CD8-positive, alpha-beta memory T cell (primary cell): ENCODE measurements at regions of chr5 and their contacts with region 1.

Region 1: GRCh38 chr5:142713121-142713706 is 27.3 kb upstream of the FGF1 start:
- DNase-seq: peak; percentile 74 to 89 (median 85)
- H3K4me3 ChIP-seq: peak overlapping the region; percentile 48
- H3K4me3 Mint-ChIP-seq: peak overlapping the region; percentile 40 to 83 (median 75)
- H3K27ac ChIP-seq: no peak overlapping the region
- H3K27ac Mint-ChIP-seq: peak overlapping the region in 5 of 8 donors; percentile 2 to 84 (median 26)
- H3K4me1 ChIP-seq: peaks cover 13% of the 10 kb centered on the region
- H3K4me1 Mint-ChIP-seq: peaks cover 20 to 22% (median 22%) of the 10 kb centered on the region in 3 donors
- H3K27me3 ChIP-seq: no peaks in the 10 kb centered on the region
- H3K27me3 Mint-ChIP-seq: peaks cover 0 to 5% of the 10 kb centered on the region in 2 donors

Region 2: DNA sequence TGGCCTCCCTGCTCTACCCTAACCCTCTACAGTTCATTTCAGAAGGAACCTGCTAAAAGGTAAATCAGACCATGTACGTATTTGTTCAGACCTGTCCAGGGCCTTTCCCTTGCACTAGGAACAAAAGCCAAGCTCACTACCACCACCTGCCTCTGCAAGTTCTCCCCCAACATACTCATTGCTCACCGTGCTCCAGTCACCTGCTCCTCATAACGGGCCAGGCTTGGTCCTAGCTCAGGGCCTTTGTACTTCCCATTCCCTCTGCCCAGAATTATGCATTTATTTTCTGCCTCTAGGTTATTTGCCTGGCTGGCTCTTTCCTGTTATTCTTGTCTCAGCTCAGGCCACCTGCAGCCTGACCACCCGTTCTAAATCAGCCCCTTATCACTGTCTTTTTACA is 22.5 kb before region 1 on chr5:
- CTCF ChIA-PET with region 1: interaction called, 10 read pairs
- POLR2A ChIA-PET with region 1: no interaction called
- DNase-seq: no peak
- H3K4me3 ChIP-seq: no peak overlapping the region
- H3K4me3 Mint-ChIP-seq: no peak overlapping the region
- H3K27ac ChIP-seq: no peak overlapping the region
- H3K27ac Mint-ChIP-seq: no peak overlapping the region
- H3K4me1 ChIP-seq: no peaks in the 10 kb centered on the region
- H3K4me1 Mint-ChIP-seq: no peaks in the 10 kb centered on the region
- H3K27me3 ChIP-seq: no peaks in the 10 kb centered on the region
- H3K27me3 Mint-ChIP-seq: peaks cover 16 to 18% of the 10 kb centered on the region in 2 donors

Region 3: GRCh38 chr5:142727735-142728047 is 14.5 kb after region 1 on chr5:
- CTCF ChIA-PET with region 1: interaction called, 38 read pairs
- POLR2A ChIA-PET with region 1: no interaction called
- DNase-seq: no peak
- H3K4me3 ChIP-seq: no peak overlapping the region
- H3K4me3 Mint-ChIP-seq: no peak overlapping the region
- H3K27ac ChIP-seq: no peak overlapping the region
- H3K27ac Mint-ChIP-seq: peak overlapping the region in 1 of 8 donors; percentile 71
- H3K4me1 ChIP-seq: no peaks in the 10 kb centered on the region
- H3K4me1 Mint-ChIP-seq: peaks cover 4 to 12% (median 9%) of the 10 kb centered on the region in 3 donors
- H3K27me3 ChIP-seq: no peaks in the 10 kb centered on the region
- H3K27me3 Mint-ChIP-seq: no peaks in the 10 kb centered on the region

Region 4: GRCh38 chr5:142748568-142749249 is 35.5 kb after region 1 on chr5:
- CTCF ChIA-PET with region 1: interaction called, 26 read pairs
- POLR2A ChIA-PET with region 1: no interaction called
- DNase-seq: peak; percentile 31 to 70 (median 39)
- H3K4me3 ChIP-seq: no peak overlapping the region
- H3K4me3 Mint-ChIP-seq: no peak overlapping the region
- H3K27ac ChIP-seq: no peak overlapping the region
- H3K27ac Mint-ChIP-seq: peak overlapping the region in 3 of 8 donors; percentile 10 to 51 (median 47)
- H3K4me1 ChIP-seq: no peaks in the 10 kb centered on the region
- H3K4me1 Mint-ChIP-seq: peaks cover 12 to 16% (median 13%) of the 10 kb centered on the region in 3 donors
- H3K27me3 ChIP-seq: no peaks in the 10 kb centered on the region
- H3K27me3 Mint-ChIP-seq: peaks cover 2 to 3% of the 10 kb centered on the region in 2 donors

Region 5: GRCh38 chr5:142783601-142784341 is 70.6 kb after region 1 on chr5:
- CTCF ChIA-PET with region 1: interaction called, 11 read pairs
- POLR2A ChIA-PET with region 1: no interaction called
- DNase-seq: peak in 4 of 5 donors; percentile 33 to 76 (median 49)
- H3K4me3 ChIP-seq: peak overlapping the region; percentile 42
- H3K4me3 Mint-ChIP-seq: peak overlapping the region; percentile 66 to 93 (median 87)
- H3K27ac ChIP-seq: peak overlapping the region; percentile 38
- H3K27ac Mint-ChIP-seq: peak overlapping the region; percentile 72 to 99 (median 93)
- H3K4me1 ChIP-seq: peaks cover 76% of the 10 kb centered on the region
- H3K4me1 Mint-ChIP-seq: peaks cover 89 to 93% (median 91%) of the 10 kb centered on the region in 3 donors
- H3K27me3 ChIP-seq: no peaks in the 10 kb centered on the region
- H3K27me3 Mint-ChIP-seq: no peaks in the 10 kb centered on the region

Region 6: DNA sequence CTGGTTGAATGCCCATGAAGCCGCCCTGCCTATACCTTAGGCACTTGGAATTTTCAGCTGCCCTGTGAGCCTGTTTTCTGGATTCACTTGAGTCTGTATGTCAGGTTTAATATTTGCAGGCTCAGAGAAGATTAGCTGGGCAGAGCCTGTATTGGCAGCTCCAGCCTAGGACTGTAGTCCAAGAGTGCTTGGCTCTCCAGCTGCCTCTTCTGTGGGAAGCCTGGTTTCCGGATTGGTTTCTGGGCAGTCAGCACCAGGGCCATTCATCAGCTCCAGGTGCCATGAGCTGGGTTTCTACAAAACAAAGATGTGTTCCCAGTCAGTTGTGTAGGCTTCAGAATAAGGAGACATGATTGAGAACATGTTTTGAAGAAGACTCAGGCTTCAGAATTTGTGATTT is 147.1 kb after region 1 on chr5:
- CTCF ChIA-PET with region 1: interaction called, 11 read pairs
- POLR2A ChIA-PET with region 1: no interaction called
- DNase-seq: no peak
- H3K4me3 ChIP-seq: no peak overlapping the region
- H3K4me3 Mint-ChIP-seq: no peak overlapping the region
- H3K27ac ChIP-seq: no peak overlapping the region
- H3K27ac Mint-ChIP-seq: peak overlapping the region in 2 of 8 donors; percentile 1 to 66
- H3K4me1 ChIP-seq: peaks cover 11% of the 10 kb centered on the region
- H3K4me1 Mint-ChIP-seq: peaks cover 83 to 92% (median 87%) of the 10 kb centered on the region in 3 donors
- H3K27me3 ChIP-seq: no peaks in the 10 kb centered on the region
- H3K27me3 Mint-ChIP-seq: no peaks in the 10 kb centered on the region

Region 7: GRCh38 chr5:142881076-142881783 is 168.0 kb after region 1 on chr5:
- CTCF ChIA-PET with region 1: interaction called, 143 read pairs
- POLR2A ChIA-PET with region 1: no interaction called
- DNase-seq: no peak
- H3K4me3 ChIP-seq: no peak overlapping the region
- H3K4me3 Mint-ChIP-seq: no peak overlapping the region
- H3K27ac ChIP-seq: no peak overlapping the region
- H3K27ac Mint-ChIP-seq: peak overlapping the region in 1 of 8 donors; percentile 70
- H3K4me1 ChIP-seq: no peaks in the 10 kb centered on the region
- H3K4me1 Mint-ChIP-seq: peaks cover 19 to 25% (median 20%) of the 10 kb centered on the region in 3 donors
- H3K27me3 ChIP-seq: no peaks in the 10 kb centered on the region
- H3K27me3 Mint-ChIP-seq: no peaks in the 10 kb centered on the region

Region 8: GRCh38 chr5:143359869-143360268 is 646.7 kb after region 1 on chr5:
- CTCF ChIA-PET with region 1: no interaction called
- POLR2A ChIA-PET with region 1: no interaction called
- DNase-seq: no peak
- H3K4me3 ChIP-seq: no peak overlapping the region
- H3K4me3 Mint-ChIP-seq: no peak overlapping the region
- H3K27ac ChIP-seq: no peak overlapping the region
- H3K27ac Mint-ChIP-seq: no peak overlapping the region
- H3K4me1 ChIP-seq: peaks cover 35% of the 10 kb centered on the region
- H3K4me1 Mint-ChIP-seq: peaks cover 77 to 97% (median 92%) of the 10 kb centered on the region in 3 donors
- H3K27me3 ChIP-seq: no peaks in the 10 kb centered on the region
- H3K27me3 Mint-ChIP-seq: no peaks in the 10 kb centered on the region